H1 (cell line): ENCODE measurements at regions of chr16 and their contacts with region 1.

Region 1: DNA sequence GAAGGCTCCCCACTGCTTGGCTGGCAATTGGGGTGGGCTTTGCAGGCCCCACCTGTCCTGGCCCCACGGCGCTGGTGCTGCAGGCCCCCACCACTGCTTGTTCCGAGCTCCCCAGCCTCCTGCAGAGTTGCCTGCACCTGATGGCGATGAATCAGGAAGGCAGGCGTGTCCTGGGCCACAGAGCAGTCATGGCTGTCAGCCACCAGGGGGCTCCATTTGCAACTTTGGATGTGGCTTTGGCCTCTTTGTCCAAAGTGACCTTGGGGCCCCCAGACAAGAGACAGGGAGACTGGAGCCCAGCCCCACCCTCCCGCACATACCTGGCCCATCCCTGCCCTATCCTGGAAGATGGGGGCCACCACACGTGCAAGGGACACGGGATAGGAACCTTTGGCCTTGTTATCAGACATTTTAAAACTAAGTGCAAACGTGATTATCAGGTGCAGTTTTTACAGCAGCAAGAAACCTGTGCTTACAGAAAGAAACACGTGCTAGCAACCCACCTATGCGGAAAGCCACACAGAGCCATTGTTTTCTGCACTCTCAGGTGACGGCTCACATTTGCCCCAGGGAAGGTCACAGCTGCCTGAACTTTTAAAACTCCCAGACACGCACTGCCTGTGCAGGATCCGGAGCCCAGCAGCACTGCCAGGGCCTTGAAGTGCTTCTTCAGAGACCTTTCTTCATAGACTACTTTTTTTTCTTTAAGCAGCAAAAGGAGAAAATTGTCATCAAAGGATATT is at the start of gene DNASE1:
- DNase-seq: peak; percentile 61 to 85
- H3K4me3 ChIP-seq: no peak within 1 kb of the TSS
- H3K27ac ChIP-seq: peak within 1 kb of the TSS; percentile 32; the same call in 1 of the 2 replicates
- H3K4me1 ChIP-seq: peaks cover 0 to 13% (median 9%) of the 10 kb centered on the region in 4 experiments; a peak in 5 of 7 replicates
- H3K27me3 ChIP-seq: no peaks in the 10 kb centered on the region
- CTCF ChIP-seq: peak; percentile 79 to 94 (median 90)
- EP300 ChIP-seq: no peak
- POLR2A ChIP-seq: no peak
- RAD21 ChIP-seq: peak; percentile 46 to 65
- total RNA-seq, gene DNASE1: 11.5 and 12.3 TPM in 2 replicates

Region 2: DNA sequence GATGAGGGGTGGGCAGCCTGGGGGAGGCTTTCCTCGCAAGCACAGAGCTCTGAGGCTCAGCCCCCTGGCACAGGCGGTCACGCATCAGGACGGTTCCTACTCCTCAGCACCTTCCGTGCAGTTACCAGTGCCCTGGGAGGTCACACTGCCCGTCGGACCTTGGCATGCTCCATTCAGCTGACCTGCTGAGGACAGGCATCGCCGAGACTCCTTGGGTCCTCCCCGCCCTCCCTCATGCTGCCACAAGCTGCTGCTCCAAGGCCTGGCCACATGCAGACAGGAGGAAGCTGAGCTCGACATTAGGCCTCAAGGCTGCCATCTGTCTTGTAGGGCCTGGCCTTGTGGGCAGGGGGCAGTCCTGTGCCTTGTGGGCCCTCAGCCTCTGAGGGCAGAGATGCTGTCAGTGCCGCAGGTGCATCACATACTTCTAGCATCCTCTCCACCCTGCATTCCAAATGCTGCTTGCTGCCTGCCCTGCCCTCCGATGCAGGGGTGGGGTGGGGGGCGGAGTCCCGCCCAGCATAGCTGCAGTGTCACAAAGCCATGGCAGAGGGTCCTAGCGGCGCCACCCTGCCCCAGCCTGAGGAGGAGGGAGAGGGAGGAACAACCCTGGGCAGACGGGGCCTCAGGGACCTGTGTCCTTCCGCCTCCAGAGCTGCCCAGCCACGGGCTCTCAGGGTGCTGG is 168.5 kb before region 1 on chr16:
- CTCF ChIA-PET with region 1: no interaction called
- POLR2A ChIA-PET with region 1: no interaction called
- DNase-seq: no peak
- H3K4me3 ChIP-seq: no peak overlapping the region
- H3K27ac ChIP-seq: no peak overlapping the region
- H3K4me1 ChIP-seq: peaks cover 0 to 6% (median 1%) of the 10 kb centered on the region in 4 experiments; a peak in 2 of 7 replicates
- H3K27me3 ChIP-seq: no peaks in the 10 kb centered on the region
- CTCF ChIP-seq: peak; percentile 51 to 70 (median 68)
- EP300 ChIP-seq: no peak
- POLR2A ChIP-seq: no peak
- RAD21 ChIP-seq: peak; percentile 32 to 50; a peak in 3 of 4 replicates

Region 3: DNA sequence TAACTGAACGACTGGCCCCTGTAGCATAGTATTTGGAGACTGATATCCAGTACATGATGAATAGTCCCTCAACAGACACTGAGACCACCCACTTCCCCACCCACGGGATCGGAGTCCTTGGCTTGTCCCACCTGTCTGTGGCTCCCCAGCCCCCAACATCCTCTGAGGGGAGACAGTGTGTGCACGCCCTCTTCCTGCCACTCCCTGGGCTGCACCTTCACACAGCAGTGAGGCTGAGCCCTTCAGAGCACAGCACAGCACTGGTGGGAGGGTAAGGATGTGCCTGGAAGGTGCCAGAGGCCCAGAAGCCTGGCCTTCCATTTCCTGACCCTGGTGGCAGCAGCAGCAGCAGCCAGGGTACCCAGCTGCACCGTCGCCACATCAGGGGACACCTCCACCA is 11.1 kb after region 1 on chr16:
- CTCF ChIA-PET with region 1: interaction called, 22 read pairs
- POLR2A ChIA-PET with region 1: no interaction called
- DNase-seq: no peak
- H3K4me3 ChIP-seq: no peak overlapping the region
- H3K27ac ChIP-seq: no peak overlapping the region
- H3K4me1 ChIP-seq: no peaks in the 10 kb centered on the region
- H3K27me3 ChIP-seq: no peaks in the 10 kb centered on the region
- CTCF ChIP-seq: peak in 2 of 3 experiments; percentile 13 to 27; a peak in 2 of 4 replicates
- EP300 ChIP-seq: no peak
- POLR2A ChIP-seq: no peak
- RAD21 ChIP-seq: peak; percentile 19 to 34; a peak in 3 of 4 replicates